ENCODE measurements at regions of chr4 and their contacts with region 1.

Region 1: GRCh38 chr4:26410385-26411293 is 79.6 kb downstream of the CCKAR start:
- DNase-seq: peak in 1 of 5 donors; percentile 42
- H3K4me3 ChIP-seq: no peak overlapping the region
- H3K27ac ChIP-seq: no peak overlapping the region
- H3K4me1 ChIP-seq: peaks cover 7% of the 10 kb centered on the region
- H3K27me3 ChIP-seq: no peaks in the 10 kb centered on the region
- CTCF ChIP-seq: peak in 2 of 3 donors; percentile 57 to 62
- EP300 ChIP-seq: no peak
- POLR2A ChIP-seq: no peak

Region 2: GRCh38 chr4:26028793-26029567 is 381.7 kb before region 1 on chr4:
- intact Hi-C with region 1: loop called in 1 of 4 experiments (anchors 5 kb)
- DNase-seq: peak; percentile 42 to 80 (median 72)
- H3K4me3 ChIP-seq: no peak overlapping the region
- H3K27ac ChIP-seq: no peak overlapping the region
- H3K4me1 ChIP-seq: peaks cover 6% of the 10 kb centered on the region
- H3K27me3 ChIP-seq: no peaks in the 10 kb centered on the region
- CTCF ChIP-seq: peak; percentile 36 to 42 (median 37)
- EP300 ChIP-seq: no peak
- POLR2A ChIP-seq: no peak

Region 3: GRCh38 chr4:26081795-26082498 is 328.7 kb before region 1 on chr4:
- intact Hi-C with region 1: loop called in 1 of 4 experiments (anchors 5 kb)
- DNase-seq: no peak
- H3K4me3 ChIP-seq: no peak overlapping the region
- H3K27ac ChIP-seq: no peak overlapping the region
- H3K4me1 ChIP-seq: no peaks in the 10 kb centered on the region
- H3K27me3 ChIP-seq: no peaks in the 10 kb centered on the region
- CTCF ChIP-seq: peak; percentile 33 to 67 (median 36)
- EP300 ChIP-seq: no peak
- POLR2A ChIP-seq: no peak

Region 4: DNA sequence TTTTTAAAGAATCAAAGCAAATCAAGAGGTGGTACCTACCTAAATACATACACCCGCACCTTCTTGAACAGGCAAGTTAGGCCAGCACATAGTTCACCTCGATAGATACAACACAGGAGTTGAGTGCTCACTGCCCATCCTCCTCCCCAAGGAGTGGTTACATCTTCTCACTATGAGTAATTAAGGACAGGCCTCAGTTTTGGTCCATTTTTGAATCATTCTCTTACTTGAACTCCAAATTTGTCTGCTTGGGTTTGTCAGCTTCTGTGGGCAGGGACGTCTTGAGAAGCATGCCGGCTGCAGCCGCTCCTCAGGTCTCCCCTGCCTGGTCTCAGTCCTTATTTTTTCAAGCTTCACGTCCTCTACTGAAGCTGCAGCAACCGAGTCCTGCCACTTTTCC is 280.5 kb before region 1 on chr4:
- intact Hi-C with region 1: no loop called
- DNase-seq: no peak
- H3K4me3 ChIP-seq: no peak overlapping the region
- H3K27ac ChIP-seq: no peak overlapping the region
- H3K4me1 ChIP-seq: no peaks in the 10 kb centered on the region
- H3K27me3 ChIP-seq: no peaks in the 10 kb centered on the region
- CTCF ChIP-seq: no peak
- EP300 ChIP-seq: no peak
- POLR2A ChIP-seq: no peak

Region 5: DNA sequence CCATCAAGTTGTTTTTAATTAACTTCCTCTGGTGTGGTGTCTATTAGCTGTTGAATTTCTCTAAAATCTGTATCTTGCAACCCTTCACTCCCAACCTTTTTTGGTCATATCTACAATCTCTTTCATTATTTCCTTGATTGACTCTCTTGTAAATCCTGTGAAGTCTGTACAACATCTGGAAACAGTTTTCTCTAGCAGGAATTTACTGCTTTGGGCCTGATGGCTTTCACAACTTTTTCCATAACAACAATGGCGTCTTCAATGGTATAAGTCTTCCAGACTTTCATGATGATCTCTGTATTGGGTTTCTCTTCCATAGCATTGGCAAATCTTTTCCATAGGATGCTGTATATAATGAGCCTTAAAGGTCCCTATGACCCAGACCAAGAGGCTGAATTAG is 222.3 kb after region 1 on chr4:
- intact Hi-C with region 1: no loop called
- DNase-seq: no peak
- H3K4me3 ChIP-seq: no peak overlapping the region
- H3K27ac ChIP-seq: no peak overlapping the region
- H3K4me1 ChIP-seq: no peaks in the 10 kb centered on the region
- H3K27me3 ChIP-seq: no peaks in the 10 kb centered on the region
- CTCF ChIP-seq: no peak
- EP300 ChIP-seq: no peak
- POLR2A ChIP-seq: no peak

Measured in ovary (tissue), 10 donors.